ENCODE measurements at regions of chr1 and their contacts with region 1.

Region 1: GRCh38 chr1:161132410-161133219 is at the start of gene DEDD:
- DNase-seq: peak; percentile 95
- H3K4me3 ChIP-seq: peak within 1 kb of the TSS; percentile 86
- H3K27ac ChIP-seq: peak within 1 kb of the TSS; percentile 70
- H3K4me1 ChIP-seq: peaks cover 30% of the 10 kb centered on the region
- CTCF ChIP-seq: peak; percentile 59; the same call in 1 of the 2 replicates
- total RNA-seq, gene DEDD: 21.1 and 28.5 TPM in 2 replicates

Region 2: GRCh38 chr1:161117759-161118581 is 14.6 kb before region 1 on chr1 and contains the starts of genes NIT1 and PFDN2:
- CTCF ChIA-PET with region 1: interaction called, 4 read pairs
- POLR2A ChIA-PET with region 1: interaction called, 10 read pairs
- intact Hi-C with region 1: no loop called
- DNase-seq: peak; percentile 86
- H3K4me3 ChIP-seq: peak within 1 kb of the TSS; percentile 87
- H3K27ac ChIP-seq: peak within 1 kb of the TSS; percentile 53
- H3K4me1 ChIP-seq: peaks cover 45% of the 10 kb centered on the region
- CTCF ChIP-seq: 0 out of 2 replicates have a peak, but pooled peaks have one; percentile 14
- total RNA-seq, gene NIT1: 30.2 and 42.7 TPM in 2 replicates
- total RNA-seq, gene PFDN2: 52.7 and 55.6 TPM in 2 replicates